Endothelial cell of umbilical vein (primary cell): ENCODE measurements at regions of chr4 and their contacts with region 1.

Region 1: GRCh38 chr4:130233377-130234047 is 1137.6 kb downstream of the C4orf33 start:
- DNase-seq: no peak
- H3K4me3 ChIP-seq: no peak overlapping the region
- H3K27ac ChIP-seq: no peak overlapping the region
- H3K4me1 ChIP-seq: peaks cover 4% of the 10 kb centered on the region
- H3K27me3 ChIP-seq: no peaks in the 10 kb centered on the region
- CTCF ChIP-seq: no peak
- POLR2A ChIP-seq: no peak

Region 2: DNA sequence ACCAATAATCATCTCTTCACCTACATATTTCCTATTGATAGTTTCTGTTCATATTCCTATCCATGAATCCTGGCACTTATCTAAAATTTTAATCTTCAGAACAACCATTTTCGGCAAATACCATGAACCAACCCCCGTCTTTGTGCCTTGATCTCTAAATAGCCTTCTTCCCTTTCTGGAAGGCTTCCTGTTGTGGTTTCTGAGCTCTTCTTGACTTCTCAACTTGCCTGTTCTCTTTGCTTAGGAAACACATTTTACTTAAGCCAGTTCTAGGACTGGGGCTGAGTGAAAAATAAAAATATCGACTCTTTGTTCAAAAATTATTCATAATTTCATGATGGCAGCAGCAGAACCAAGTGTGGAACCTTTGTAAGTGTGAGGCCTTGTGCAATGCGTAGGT is 255.2 kb before region 1 on chr4:
- CTCF ChIA-PET with region 1: no interaction called
- POLR2A ChIA-PET with region 1: no interaction called
- dilution Hi-C with region 1: no loop called
- intact Hi-C with region 1: no loop called
- DNase-seq: no peak
- H3K4me3 ChIP-seq: no peak overlapping the region
- H3K27ac ChIP-seq: no peak overlapping the region
- H3K4me1 ChIP-seq: no peaks in the 10 kb centered on the region
- H3K27me3 ChIP-seq: no peaks in the 10 kb centered on the region
- CTCF ChIP-seq: no peak
- POLR2A ChIP-seq: no peak

Region 3: GRCh38 chr4:130110189-130110588 is 123.3 kb before region 1 on chr4:
- CTCF ChIA-PET with region 1: no interaction called
- POLR2A ChIA-PET with region 1: no interaction called
- dilution Hi-C with region 1: no loop called
- intact Hi-C with region 1: loop called (anchors 5 kb)
- DNase-seq: no peak
- H3K4me3 ChIP-seq: no peak overlapping the region
- H3K27ac ChIP-seq: no peak overlapping the region
- H3K4me1 ChIP-seq: no peaks in the 10 kb centered on the region
- H3K27me3 ChIP-seq: no peaks in the 10 kb centered on the region
- CTCF ChIP-seq: no peak
- POLR2A ChIP-seq: no peak